Heart left ventricle (tissue), 16 donors: ENCODE measurements at regions of chr1 and their contacts with region 1.

Region 1: DNA sequence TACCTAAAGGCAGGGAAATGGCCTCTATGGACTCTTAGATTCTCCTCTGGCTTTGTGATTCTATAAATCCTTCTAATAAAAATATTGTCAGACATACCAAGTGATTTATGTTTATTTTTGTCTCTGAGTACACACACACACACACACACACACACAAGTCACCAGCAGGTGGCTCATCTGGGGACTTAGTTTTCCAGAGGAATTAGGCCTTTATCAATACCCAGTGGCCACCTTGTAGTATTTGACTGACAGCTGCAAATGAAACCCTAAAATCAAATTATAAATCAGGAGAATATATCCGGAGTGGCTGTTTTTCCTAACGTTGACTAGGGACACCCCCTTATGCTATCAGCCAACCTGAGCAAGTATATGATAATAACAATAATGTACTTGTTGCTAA is 258.5 kb downstream of the BRINP2 start:
- DNase-seq: no peak
- ATAC-seq: no peak
- H3K4me3 ChIP-seq: no peak overlapping the region
- H3K27ac ChIP-seq: no peak overlapping the region
- H3K4me1 ChIP-seq: no peaks in the 10 kb centered on the region
- H3K27me3 ChIP-seq: peaks cover 0 to 10% (median 0%) of the 10 kb centered on the region in 9 donors
- CTCF ChIP-seq: no peak
- POLR2A ChIP-seq: no peak

Region 2: DNA sequence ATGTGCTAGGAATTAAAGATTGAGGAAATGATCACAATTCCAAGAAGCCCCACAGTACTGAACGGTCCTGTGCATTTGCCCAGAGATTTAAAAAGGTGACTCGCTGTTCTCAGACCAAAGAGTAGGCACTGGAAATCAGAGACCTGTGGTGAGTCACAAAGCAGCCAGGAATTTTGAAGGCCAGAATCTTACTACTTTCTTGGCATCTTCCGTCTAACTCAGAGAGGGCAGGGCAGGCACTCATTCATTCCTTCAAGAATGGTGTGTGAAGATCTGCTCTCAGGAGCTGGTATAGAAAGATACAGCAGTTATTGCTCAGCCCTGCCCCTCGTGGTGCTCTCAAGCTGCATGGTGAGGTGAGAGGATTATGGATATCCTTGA is 200.6 kb before region 1 on chr1:
- intact Hi-C with region 1: no loop called
- DNase-seq: no peak
- ATAC-seq: no peak
- H3K4me3 ChIP-seq: no peak overlapping the region
- H3K27ac ChIP-seq: no peak overlapping the region
- H3K4me1 ChIP-seq: peaks cover 0 to 5% (median 0%) of the 10 kb centered on the region in 12 donors
- H3K27me3 ChIP-seq: no peaks in the 10 kb centered on the region
- CTCF ChIP-seq: no peak
- POLR2A ChIP-seq: no peak

Region 3: DNA sequence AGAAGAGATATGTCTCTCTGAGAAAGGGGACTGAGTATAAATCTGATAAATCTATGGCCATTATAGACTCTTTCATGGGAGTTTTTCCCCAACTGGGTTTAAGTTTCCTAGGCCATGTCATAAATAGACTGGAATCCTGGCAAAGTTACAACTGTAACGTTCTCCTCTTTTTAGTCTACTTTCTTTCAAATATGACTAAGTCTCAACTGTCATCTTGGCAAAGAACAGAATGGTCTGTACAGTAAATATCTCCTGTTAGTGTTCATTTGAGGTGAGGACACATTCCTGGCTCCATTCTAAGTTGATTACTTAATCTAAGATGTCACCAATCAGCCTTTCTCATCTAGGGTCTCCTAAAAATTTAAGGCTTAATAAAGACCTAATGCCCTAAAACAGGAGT is 42.0 kb after region 1 on chr1:
- intact Hi-C with region 1: no loop called
- DNase-seq: no peak
- ATAC-seq: no peak
- H3K4me3 ChIP-seq: no peak overlapping the region
- H3K27ac ChIP-seq: no peak overlapping the region
- H3K4me1 ChIP-seq: no peaks in the 10 kb centered on the region
- H3K27me3 ChIP-seq: peaks cover 0 to 4% (median 0%) of the 10 kb centered on the region in 9 donors
- CTCF ChIP-seq: no peak
- POLR2A ChIP-seq: no peak

Region 4: DNA sequence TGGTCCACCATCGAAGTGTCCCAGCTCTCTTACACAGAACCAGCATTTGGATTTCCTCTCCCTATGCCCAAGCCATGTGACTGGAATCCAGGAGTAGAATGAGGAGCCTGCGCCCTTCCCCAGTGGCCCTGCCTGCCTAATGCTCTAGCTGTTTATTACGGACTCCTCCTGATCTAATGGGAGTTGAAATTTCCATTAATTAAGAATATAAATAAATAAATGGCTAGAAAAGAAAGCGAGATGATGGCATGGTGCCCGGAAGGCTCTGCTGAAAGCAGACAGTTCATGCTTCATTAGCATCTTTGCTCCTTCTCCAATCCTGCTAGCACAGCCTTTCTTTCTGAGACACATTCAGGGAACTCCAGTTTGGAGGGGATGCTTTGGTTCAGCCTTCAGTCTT is 324.4 kb after region 1 on chr1:
- intact Hi-C with region 1: loop called in 1 of 10 experiments (anchors 10 kb)
- DNase-seq: no peak
- ATAC-seq: no peak
- H3K4me3 ChIP-seq: no peak overlapping the region
- H3K27ac ChIP-seq: no peak overlapping the region
- H3K4me1 ChIP-seq: no peaks in the 10 kb centered on the region
- H3K27me3 ChIP-seq: peaks cover 0 to 27% (median 4%) of the 10 kb centered on the region in 9 donors
- CTCF ChIP-seq: no peak
- POLR2A ChIP-seq: no peak